ENCODE measurements at regions of chr15 and their contacts with region 1.

Region 1: GRCh38 chr15:92683232-92683834 is 27.8 kb upstream of the FAM174B start:
- DNase-seq: peak; percentile 81
- ATAC-seq: peak; percentile 54; the same call in 1 of the 2 replicates
- H3K4me3 ChIP-seq: no peak overlapping the region
- H3K27ac ChIP-seq: no peak overlapping the region
- H3K4me1 ChIP-seq: peaks cover 24% of the 10 kb centered on the region
- H3K27me3 ChIP-seq: no peaks in the 10 kb centered on the region
- CTCF ChIP-seq: peak; percentile 91

Region 2: GRCh38 chr15:92521624-92522008 is 161.7 kb before region 1 on chr15:
- CTCF ChIA-PET with region 1: interaction called, 3 read pairs
- POLR2A ChIA-PET with region 1: no interaction called
- intact Hi-C with region 1: loop called (anchors 5 kb)
- DNase-seq: peak; percentile 86
- ATAC-seq: peak; percentile 78
- H3K4me3 ChIP-seq: no peak overlapping the region
- H3K27ac ChIP-seq: no peak overlapping the region
- H3K4me1 ChIP-seq: no peaks in the 10 kb centered on the region
- H3K27me3 ChIP-seq: peaks cover 3% of the 10 kb centered on the region; the same call in 1 of the 2 replicates
- CTCF ChIP-seq: peak; percentile 80

Region 3: DNA sequence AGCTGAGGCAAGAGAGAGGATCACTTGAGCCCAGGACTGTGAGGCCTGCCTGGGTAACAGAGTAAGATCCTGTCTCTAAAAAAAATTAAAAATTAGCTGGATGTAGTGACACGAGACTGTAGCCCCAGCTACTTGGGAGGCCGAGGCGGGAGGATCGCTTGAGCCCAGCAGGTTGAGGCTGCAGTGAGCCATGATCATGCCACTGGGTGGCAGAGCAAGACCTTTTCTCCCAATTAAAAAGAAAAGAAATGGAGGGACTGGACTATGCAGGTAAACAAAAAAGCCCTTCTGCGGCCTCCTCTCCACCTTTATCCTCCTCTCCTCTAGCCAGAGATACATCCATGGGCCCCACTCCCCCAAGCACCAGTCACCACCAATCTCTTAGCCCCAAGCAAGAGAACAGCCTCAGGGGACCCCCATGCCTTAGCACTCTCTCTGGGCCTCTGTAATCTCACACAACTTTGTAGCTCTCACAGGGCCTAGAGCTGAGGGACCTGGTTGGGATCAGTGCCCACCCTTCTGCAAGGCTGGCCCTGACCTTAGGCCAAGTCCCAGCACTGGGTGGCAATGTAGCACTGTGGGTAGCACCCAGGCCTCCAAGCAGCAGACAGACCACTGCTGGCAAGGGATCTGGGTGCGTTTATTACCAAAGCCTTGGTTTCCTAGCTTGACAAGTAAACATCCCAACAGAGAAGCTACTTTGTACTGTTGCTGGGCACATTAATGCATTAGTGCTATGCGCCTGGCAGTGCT is 71.2 kb before region 1 on chr15:
- CTCF ChIA-PET with region 1: no interaction called
- POLR2A ChIA-PET with region 1: no interaction called
- intact Hi-C with region 1: loop called (anchors 5 kb)
- DNase-seq: no peak
- ATAC-seq: 0 out of 2 replicates have a peak, but pooled peaks have one; percentile 22
- H3K4me3 ChIP-seq: no peak overlapping the region
- H3K27ac ChIP-seq: no peak overlapping the region
- H3K4me1 ChIP-seq: peaks cover 12% of the 10 kb centered on the region
- H3K27me3 ChIP-seq: no peaks in the 10 kb centered on the region
- CTCF ChIP-seq: peak; percentile 18; the same call in 1 of the 2 replicates